CD4-positive, alpha-beta T cell (primary cell): ENCODE measurements at regions of chr1 and their contacts with region 1.

Region 1: GRCh38 chr1:207499573-207499972 is 3.6 kb downstream of the CR1 start:
- DNase-seq: peak; percentile 54 to 87 (median 62)
- ATAC-seq: peak; percentile 82
- H3K4me3 ChIP-seq: no peak overlapping the region
- H3K4me3 Mint-ChIP-seq: no peak overlapping the region
- H3K27ac ChIP-seq: no peak overlapping the region
- H3K27ac Mint-ChIP-seq: no peak overlapping the region
- H3K4me1 ChIP-seq: peaks cover 16% of the 10 kb centered on the region
- H3K4me1 Mint-ChIP-seq: peaks cover 16% of the 10 kb centered on the region
- H3K27me3 ChIP-seq: peaks cover 0 to 18% of the 10 kb centered on the region in 2 experiments
- H3K27me3 Mint-ChIP-seq: peaks cover 58% of the 10 kb centered on the region
- CTCF ChIP-seq: peak; percentile 80

Region 2: DNA sequence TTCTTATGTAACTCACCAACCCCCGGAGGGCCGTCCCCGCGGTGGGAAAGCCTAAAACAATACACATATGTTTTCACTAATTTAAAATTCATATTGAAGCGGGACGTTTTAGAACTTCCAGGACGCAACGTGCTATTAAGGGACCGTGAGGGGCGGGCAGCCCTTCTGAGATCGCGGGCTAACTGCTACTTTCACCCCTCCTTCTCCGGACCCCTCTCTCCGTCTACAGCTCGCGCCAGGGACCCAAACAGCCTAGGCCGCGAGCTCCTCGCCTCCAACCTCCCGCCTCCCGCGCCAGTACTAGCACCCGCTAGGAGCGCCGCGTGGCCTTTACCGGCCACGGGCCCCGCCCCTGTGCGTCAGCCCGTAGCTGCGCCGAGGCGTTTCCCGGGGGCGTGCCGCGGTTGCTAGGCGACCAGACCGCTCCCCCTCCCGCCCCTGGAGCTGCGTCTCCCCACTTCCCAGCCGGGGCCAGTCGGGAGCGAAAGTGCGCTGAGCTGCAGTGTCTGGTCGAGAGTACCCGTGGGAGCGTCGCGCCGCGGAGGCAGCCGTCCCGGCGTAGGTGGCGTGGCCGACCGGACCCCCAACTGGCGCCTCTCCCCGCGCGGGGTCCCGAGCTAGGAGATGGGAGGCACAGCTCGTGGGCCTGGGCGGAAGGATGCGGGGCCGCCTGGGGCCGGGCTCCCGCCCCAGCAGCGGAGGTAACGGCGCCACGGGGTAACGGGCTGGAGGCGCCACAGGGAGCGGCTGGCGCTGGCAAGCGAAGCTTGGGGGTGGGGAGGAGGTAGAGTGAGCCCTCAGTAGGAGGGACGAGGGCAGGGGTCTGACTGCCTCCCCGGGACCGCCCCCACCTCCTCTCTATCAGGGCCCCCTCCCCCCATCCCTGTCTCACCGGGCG is 864.2 kb before region 1 on chr1 and contains the start of gene DYRK3:
- CTCF ChIA-PET with region 1: no interaction called
- POLR2A ChIA-PET with region 1: no interaction called
- intact Hi-C with region 1: loop called in 1 of 2 experiments (anchors 5 kb)
- DNase-seq: peak; percentile 74 to 95 (median 85)
- ATAC-seq: peak; percentile 93
- H3K4me3 ChIP-seq: peak within 1 kb of the TSS; percentile 64
- H3K4me3 Mint-ChIP-seq: peak within 1 kb of the TSS; percentile 92
- H3K27ac ChIP-seq: peak within 1 kb of the TSS in 1 of 2 donors; percentile 52
- H3K27ac Mint-ChIP-seq: peak within 1 kb of the TSS; percentile 66
- H3K4me1 ChIP-seq: peaks cover 20% of the 10 kb centered on the region
- H3K4me1 Mint-ChIP-seq: peaks cover 18% of the 10 kb centered on the region
- H3K27me3 ChIP-seq: peaks cover 0 to 14% of the 10 kb centered on the region in 2 experiments
- H3K27me3 Mint-ChIP-seq: no peaks in the 10 kb centered on the region
- CTCF ChIP-seq: no peak
- total RNA-seq, gene DYRK3: 1.6 to 1.7 TPM

Region 3: DNA sequence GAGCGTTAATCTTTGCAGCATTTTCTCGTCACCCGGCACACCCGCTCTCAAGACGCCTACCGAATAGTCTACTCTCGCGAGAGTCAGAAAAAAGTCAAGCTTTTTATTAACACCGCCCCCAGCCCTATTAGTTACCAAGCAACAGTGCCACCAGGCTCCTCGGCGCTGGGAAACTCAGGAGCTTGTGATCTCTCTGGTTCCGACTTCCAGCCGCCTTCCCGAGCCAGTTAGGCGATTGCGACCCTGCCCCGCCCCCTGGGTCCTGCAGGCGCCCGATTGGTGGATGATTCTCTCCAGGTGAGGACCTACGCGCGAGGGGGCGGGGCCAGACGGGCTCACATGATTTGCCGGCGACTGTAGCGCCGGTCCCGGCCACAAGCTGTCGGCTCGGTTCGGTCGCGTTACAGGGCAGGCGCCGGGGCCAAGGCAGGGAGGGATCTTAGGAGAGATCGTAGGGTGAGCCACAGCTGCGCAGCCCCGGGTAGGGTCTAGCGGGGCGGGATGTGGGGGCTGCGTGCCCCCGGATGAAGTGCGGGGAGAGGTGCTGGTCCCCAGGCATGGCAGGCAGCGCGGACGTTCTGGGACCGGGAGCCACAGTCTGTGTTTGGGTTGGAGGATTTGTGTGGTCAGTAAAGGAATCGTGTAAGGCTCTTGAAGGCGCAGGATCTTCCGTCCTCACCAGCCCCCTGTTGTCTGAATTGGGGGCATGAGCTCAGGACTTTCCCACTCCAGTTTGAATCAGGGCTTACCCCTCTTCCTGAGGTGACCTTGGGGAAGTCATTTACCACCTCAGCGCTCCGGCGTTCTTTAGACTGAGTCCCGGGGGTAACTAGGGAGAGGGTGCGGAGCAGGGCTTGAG is 446.4 kb before region 1 on chr1 and contains the start of gene PFKFB2:
- CTCF ChIA-PET with region 1: no interaction called
- POLR2A ChIA-PET with region 1: interaction called, 3 read pairs
- intact Hi-C with region 1: loop called in 1 of 2 experiments (anchors 1 kb)
- DNase-seq: peak; percentile 85 to 97 (median 94)
- ATAC-seq: peak; percentile 87
- H3K4me3 ChIP-seq: peak within 1 kb of the TSS; percentile 66
- H3K4me3 Mint-ChIP-seq: peak within 1 kb of the TSS; percentile 98
- H3K27ac ChIP-seq: peak within 1 kb of the TSS; percentile 24 to 50
- H3K27ac Mint-ChIP-seq: peak within 1 kb of the TSS; percentile 93
- H3K4me1 ChIP-seq: peaks cover 29% of the 10 kb centered on the region
- H3K4me1 Mint-ChIP-seq: peaks cover 56% of the 10 kb centered on the region
- H3K27me3 ChIP-seq: no peaks in the 10 kb centered on the region
- H3K27me3 Mint-ChIP-seq: no peaks in the 10 kb centered on the region
- CTCF ChIP-seq: no peak
- total RNA-seq, gene PFKFB2: 3.2 to 4.0 TPM

Region 4: DNA sequence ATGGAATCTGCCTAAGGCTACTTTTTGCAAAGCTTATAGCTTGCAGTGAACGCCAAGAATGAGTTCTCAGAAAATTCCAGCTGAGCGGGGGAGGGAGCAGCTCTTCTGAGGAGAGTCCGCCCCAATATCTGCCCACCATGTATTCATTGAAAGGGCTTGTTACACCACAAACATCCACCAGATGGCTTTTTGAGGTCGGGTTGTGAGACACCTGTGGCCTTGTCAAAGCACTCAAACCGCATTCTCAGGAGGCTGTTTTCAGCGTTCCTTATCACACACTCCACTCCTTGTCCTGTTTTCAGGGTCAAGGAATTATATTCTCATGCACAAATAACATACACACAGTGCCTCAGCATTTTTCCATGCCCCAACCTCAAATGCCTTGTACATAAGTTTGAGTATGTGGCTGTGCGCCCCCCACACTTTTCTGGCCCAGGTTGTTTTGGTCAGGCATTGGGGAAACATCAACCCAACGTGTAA is 414.8 kb before region 1 on chr1:
- CTCF ChIA-PET with region 1: interaction called, 25 read pairs
- POLR2A ChIA-PET with region 1: no interaction called
- intact Hi-C with region 1: loop called (anchors 1 kb)
- DNase-seq: peak; percentile 19 to 83 (median 40)
- ATAC-seq: peak; percentile 77
- H3K4me3 ChIP-seq: no peak overlapping the region
- H3K4me3 Mint-ChIP-seq: no peak overlapping the region
- H3K27ac ChIP-seq: no peak overlapping the region
- H3K27ac Mint-ChIP-seq: no peak overlapping the region
- H3K4me1 ChIP-seq: peaks cover 10% of the 10 kb centered on the region
- H3K4me1 Mint-ChIP-seq: peaks cover 21% of the 10 kb centered on the region
- H3K27me3 ChIP-seq: no peaks in the 10 kb centered on the region
- H3K27me3 Mint-ChIP-seq: peaks cover 35% of the 10 kb centered on the region
- CTCF ChIP-seq: peak; percentile 68

Region 5: DNA sequence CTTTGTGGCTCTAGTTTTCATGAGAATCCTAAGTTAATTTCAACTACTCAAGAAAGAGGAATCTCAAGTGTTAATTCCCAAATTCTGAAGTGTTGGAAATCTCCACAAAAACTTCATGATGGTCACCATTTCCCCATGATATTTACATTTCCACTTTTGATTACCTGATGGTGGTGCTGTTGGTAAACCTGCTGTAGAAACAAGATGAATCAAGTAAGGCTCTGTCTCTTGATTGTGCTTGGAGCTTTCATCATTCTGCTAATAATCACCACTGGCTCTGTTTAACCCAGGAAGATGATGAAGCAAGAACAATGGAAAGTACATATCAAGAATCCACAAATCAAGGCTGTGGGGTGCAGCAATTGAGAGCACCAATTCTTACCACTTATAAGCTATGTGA is 317.7 kb before region 1 on chr1:
- CTCF ChIA-PET with region 1: interaction called, 4 read pairs
- POLR2A ChIA-PET with region 1: no interaction called
- intact Hi-C with region 1: loop called in 1 of 2 experiments (anchors 2 kb)
- DNase-seq: peak in 3 of 14 experiments; percentile 30 to 47 (median 42)
- ATAC-seq: no peak
- H3K4me3 ChIP-seq: no peak overlapping the region
- H3K4me3 Mint-ChIP-seq: no peak overlapping the region
- H3K27ac ChIP-seq: no peak overlapping the region
- H3K27ac Mint-ChIP-seq: no peak overlapping the region
- H3K4me1 ChIP-seq: no peaks in the 10 kb centered on the region
- H3K4me1 Mint-ChIP-seq: no peaks in the 10 kb centered on the region
- H3K27me3 ChIP-seq: no peaks in the 10 kb centered on the region
- H3K27me3 Mint-ChIP-seq: peaks cover 11% of the 10 kb centered on the region
- CTCF ChIP-seq: peak; percentile 55

Region 6: DNA sequence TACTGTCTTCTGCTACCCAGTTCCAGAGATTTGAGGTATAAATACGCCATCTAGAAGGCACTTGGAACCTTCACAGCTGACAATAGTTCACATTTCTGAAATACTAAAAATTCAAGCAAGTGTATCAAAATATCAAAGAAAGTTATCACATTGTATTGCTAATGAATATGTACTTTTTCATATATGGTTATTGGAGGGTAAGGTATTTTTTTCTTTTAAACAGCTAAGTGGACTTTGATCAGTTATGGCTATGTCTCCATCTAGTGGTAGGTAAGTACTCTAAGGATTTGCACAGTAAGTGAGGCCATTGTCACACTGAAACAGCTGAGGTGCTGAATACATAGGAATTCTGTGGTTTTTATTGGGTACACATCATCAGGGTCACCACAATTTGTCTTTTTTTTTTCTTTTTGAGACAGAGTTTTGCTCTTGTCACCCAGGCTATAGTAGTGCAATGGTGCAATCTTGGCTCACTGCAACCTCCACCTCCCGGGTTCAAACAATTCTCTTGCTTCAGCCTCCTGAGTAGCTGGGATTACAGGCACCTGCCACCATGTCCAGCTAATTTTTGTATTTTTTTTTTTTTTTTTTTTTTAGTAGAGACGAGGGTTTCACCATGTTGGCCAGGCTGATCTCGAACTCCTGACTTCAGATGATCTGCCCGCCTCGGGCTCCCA is 94.6 kb before region 1 on chr1:
- CTCF ChIA-PET with region 1: interaction called, 6 read pairs
- POLR2A ChIA-PET with region 1: no interaction called
- intact Hi-C with region 1: loop called (anchors 2 kb)
- DNase-seq: peak in 4 of 14 experiments; percentile 11 to 79 (median 72)
- ATAC-seq: peak; percentile 79
- H3K4me3 ChIP-seq: no peak overlapping the region
- H3K4me3 Mint-ChIP-seq: no peak overlapping the region
- H3K27ac ChIP-seq: no peak overlapping the region
- H3K27ac Mint-ChIP-seq: no peak overlapping the region
- H3K4me1 ChIP-seq: no peaks in the 10 kb centered on the region
- H3K4me1 Mint-ChIP-seq: no peaks in the 10 kb centered on the region
- H3K27me3 ChIP-seq: no peaks in the 10 kb centered on the region
- H3K27me3 Mint-ChIP-seq: no peaks in the 10 kb centered on the region
- CTCF ChIP-seq: peak; percentile 81

Region 7: DNA sequence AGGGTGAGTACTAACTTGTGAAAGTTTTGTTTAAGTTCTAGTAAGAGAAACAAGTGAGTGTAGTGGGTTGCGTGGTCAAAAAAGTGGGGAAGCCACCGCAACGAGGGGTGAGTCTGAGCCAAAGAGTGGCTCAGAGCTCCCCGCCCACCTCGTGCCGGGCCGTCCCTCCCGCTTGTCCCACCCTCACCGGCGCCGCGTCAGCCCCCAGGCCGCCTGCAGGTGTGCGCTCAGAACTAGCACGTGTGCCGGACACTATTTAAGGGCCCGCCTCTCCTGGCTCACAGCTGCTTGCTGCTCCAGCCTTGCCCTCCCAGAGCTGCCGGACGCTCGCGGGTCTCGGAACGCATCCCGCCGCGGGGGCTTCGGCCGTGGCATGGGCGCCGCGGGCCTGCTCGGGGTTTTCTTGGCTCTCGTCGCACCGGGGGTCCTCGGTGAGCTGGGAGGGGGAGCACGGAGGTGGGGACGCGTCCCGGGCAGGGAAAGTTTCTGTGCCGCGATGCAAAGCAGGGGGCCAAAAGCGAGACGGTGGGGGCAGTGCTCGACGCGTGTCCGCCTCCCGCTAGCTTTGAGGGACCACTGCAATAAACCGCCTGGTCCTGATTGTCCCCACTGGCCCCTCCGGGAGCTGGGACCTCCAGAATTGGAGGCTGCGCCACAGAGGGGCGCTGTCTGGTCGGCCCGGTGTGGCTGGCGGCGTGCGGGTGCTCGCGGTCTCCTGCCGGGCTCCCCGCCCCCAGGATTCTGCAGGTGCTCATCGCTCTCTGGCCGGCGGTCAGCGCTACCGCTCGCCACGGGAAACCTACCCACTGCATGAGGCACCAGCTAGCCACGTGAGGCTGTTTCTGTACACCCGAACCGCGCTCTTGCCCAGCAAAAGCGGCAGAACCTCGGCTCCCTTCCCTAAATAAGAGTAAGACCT is 45.3 kb before region 1 on chr1 and contains the start of gene CR2:
- CTCF ChIA-PET with region 1: interaction called, 18 read pairs
- POLR2A ChIA-PET with region 1: interaction called, 5 read pairs
- intact Hi-C with region 1: loop called (anchors 2 kb)
- DNase-seq: peak in 13 of 14 experiments; percentile 7 to 69 (median 25)
- ATAC-seq: peak; percentile 51
- H3K4me3 ChIP-seq: peak within 1 kb of the TSS; percentile 56
- H3K4me3 Mint-ChIP-seq: peak within 1 kb of the TSS; percentile 71
- H3K27ac ChIP-seq: no peak within 1 kb of the TSS
- H3K27ac Mint-ChIP-seq: peak within 1 kb of the TSS; percentile 19
- H3K4me1 ChIP-seq: peaks cover 26% of the 10 kb centered on the region
- H3K4me1 Mint-ChIP-seq: peaks cover 14% of the 10 kb centered on the region
- H3K27me3 ChIP-seq: peaks cover 16 to 22% of the 10 kb centered on the region in 2 experiments
- H3K27me3 Mint-ChIP-seq: peaks cover 32% of the 10 kb centered on the region
- CTCF ChIP-seq: peak; percentile 46
- total RNA-seq, gene CR2: 1.2 TPM

Region 8: DNA sequence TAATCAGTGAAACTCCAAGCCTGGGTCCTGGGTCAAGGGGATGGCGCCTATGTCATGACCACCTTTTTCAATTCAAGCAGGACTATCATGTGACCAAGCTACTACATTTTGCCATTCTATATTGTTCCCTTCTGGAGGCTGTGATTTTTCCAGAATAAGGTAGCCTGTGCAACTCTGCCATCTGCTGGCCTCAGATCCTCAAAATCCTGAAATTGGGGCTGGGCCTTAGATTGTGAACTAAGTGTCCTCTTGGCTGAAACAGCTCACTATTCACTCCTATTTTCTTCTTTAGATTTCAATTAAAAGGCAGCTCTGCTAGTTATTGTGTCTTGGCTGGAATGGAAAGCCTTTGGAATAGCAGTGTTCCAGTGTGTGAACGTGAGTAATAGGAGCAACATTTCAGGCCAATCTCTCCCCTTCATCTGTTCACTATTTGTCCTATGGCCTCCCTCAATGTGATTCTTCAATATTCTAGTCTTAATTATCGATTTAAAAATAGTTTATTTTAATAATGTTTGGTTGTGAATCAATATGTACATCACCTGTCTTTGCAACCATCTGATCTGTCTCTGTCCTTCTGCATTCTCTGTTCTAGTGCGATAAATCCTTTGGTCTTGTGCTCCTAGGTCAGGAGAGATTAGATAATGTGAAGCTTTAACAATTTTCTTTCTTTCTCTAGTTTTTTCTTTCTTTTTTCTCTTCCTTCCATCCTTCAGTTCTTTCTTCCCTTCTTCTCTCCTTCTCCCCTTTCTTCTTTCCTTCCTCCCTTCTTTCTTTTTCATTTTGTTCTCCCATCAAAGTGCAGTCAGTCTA is 66.2 kb after region 1 on chr1:
- CTCF ChIA-PET with region 1: no interaction called
- POLR2A ChIA-PET with region 1: no interaction called
- intact Hi-C with region 1: no loop called
- DNase-seq: peak in 1 of 14 experiments; percentile 6
- ATAC-seq: no peak
- H3K4me3 ChIP-seq: no peak overlapping the region
- H3K4me3 Mint-ChIP-seq: no peak overlapping the region
- H3K27ac ChIP-seq: no peak overlapping the region
- H3K27ac Mint-ChIP-seq: no peak overlapping the region
- H3K4me1 ChIP-seq: no peaks in the 10 kb centered on the region
- H3K4me1 Mint-ChIP-seq: no peaks in the 10 kb centered on the region
- H3K27me3 ChIP-seq: no peaks in the 10 kb centered on the region
- H3K27me3 Mint-ChIP-seq: no peaks in the 10 kb centered on the region
- CTCF ChIP-seq: no peak